Head of caudate nucleus (tissue), 42 donors: ENCODE measurements at regions of chr2 and their contacts with region 1.

Region 1: GRCh38 chr2:112054847-112055729 is at the start of gene TMEM87B:
- DNase-seq: peak; percentile 88 to 99 (median 97)

Region 2: DNA sequence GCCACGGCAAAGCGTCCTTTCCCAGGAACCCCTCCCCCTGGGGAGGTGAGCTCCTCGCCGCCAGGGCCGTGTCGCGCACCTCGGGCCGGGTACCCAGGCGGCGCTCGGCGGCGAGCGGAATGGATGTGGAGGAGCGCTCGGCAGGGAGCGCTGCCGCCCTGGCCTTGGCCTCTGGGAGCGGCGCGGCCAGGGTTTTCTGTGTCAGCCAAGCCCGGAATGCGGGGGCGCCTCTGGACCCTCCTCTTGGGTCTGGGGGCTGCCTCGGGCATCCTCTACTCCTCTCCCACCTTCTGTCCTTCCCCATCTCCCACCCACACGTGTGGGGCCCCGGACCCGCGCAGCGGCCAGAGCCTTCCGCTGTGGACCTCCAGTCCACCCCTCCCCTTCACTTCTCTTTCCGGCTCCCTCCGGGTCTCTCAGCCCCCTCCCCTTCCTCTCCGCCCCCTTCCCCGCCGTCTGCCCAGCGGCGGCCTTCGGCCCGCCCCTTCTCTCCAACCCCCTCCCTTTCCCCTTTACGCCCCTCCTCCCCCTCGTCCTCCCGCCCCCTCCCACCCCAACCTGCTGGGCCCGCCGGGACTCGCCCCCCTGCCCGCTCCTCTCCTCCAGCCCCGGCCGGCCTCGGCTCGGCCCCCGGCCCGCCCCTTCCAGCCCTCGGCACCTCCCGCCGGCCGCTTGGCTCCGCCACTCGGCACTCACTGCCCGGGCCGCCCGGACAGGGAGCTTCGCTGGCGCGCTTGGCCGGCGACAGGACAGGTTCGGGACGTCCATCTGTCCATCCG is 157.0 kb before region 1 on chr2 and contains the start of gene MERTK:
- intact Hi-C with region 1: loop called (anchors 5 kb)
- DNase-seq: peak in 40 of 42 donors; percentile 63 to 90 (median 78)

Region 3: DNA sequence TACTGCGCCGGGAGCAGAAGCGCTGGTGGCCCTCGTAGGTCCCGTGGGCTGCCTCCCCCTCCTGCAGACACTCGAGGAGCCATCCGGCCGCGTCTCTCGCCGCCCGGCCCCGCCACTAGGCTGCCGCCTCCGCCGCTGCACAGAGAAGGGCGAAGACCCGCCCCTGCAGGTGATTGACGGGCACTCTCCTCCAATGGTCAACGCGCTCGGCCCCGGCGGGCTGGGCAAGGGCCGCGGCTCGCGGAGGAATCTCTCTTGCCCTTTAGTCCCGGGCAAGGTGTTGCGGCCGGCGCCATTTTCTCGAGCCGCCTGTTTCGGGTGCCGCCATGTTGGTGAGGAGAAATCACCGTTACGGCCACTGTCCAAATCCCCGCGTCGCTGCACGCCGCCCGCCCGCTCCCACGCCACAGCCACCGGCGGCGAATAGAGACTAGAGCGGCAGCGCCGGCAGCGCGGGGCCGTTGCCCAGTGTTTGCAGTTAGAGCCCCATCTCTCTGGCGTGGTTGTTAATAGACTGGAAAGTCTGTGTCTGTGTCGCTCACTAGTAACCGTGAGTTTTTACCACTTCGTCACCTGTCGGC is 220.3 kb after region 1 on chr2 and contains the start of gene ZC3H6:
- intact Hi-C with region 1: loop called (anchors 10 kb)
- DNase-seq: peak; percentile 97 to 100 (median 100)